K562 (cell line): ENCODE measurements at regions of chr13 and their contacts with region 1.

Region 1: GRCh38 chr13:24233351-24233901 is 72.9 kb downstream of the SPATA13 start:
- DNase-seq: no peak
- ATAC-seq: no peak
- H3K4me3 ChIP-seq: no peak overlapping the region
- H3K27ac ChIP-seq: no peak overlapping the region
- H3K4me1 ChIP-seq: no peaks in the 10 kb centered on the region
- H3K27me3 ChIP-seq: no peaks in the 10 kb centered on the region
- CTCF ChIP-seq: no peak
- EP300 ChIP-seq: no peak
- POLR2A ChIP-seq: no peak
- RAD21 ChIP-seq: no peak

Region 2: GRCh38 chr13:23656637-23657371 is 576.6 kb before region 1 on chr13:
- CTCF ChIA-PET with region 1: no interaction called
- POLR2A ChIA-PET with region 1: no interaction called
- in situ Hi-C with region 1: no loop called
- intact Hi-C with region 1: no loop called
- DNase-seq: peak in 1 of 4 experiments; percentile 2
- ATAC-seq: no peak
- H3K4me3 ChIP-seq: no peak overlapping the region
- H3K27ac ChIP-seq: no peak overlapping the region
- H3K4me1 ChIP-seq: no peaks in the 10 kb centered on the region
- H3K27me3 ChIP-seq: peaks cover 0 to 6% of the 10 kb centered on the region in 2 experiments; a peak in 2 of 5 replicates
- CTCF ChIP-seq: no peak
- EP300 ChIP-seq: 0 out of 2 replicates have a peak, but pooled peaks have one; percentile 10
- POLR2A ChIP-seq: no peak
- RAD21 ChIP-seq: no peak

Region 3: GRCh38 chr13:24012648-24013047 is 220.8 kb before region 1 on chr13:
- CTCF ChIA-PET with region 1: no interaction called
- POLR2A ChIA-PET with region 1: no interaction called
- in situ Hi-C with region 1: loop called (anchors 10 kb)
- intact Hi-C with region 1: no loop called
- DNase-seq: no peak
- ATAC-seq: no peak
- H3K4me3 ChIP-seq: no peak overlapping the region
- H3K27ac ChIP-seq: no peak overlapping the region
- H3K4me1 ChIP-seq: no peaks in the 10 kb centered on the region
- H3K27me3 ChIP-seq: peaks cover 0 to 20% of the 10 kb centered on the region in 2 experiments; a peak in 1 of 5 replicates
- CTCF ChIP-seq: no peak
- EP300 ChIP-seq: no peak
- POLR2A ChIP-seq: no peak
- RAD21 ChIP-seq: no peak

Region 4: DNA sequence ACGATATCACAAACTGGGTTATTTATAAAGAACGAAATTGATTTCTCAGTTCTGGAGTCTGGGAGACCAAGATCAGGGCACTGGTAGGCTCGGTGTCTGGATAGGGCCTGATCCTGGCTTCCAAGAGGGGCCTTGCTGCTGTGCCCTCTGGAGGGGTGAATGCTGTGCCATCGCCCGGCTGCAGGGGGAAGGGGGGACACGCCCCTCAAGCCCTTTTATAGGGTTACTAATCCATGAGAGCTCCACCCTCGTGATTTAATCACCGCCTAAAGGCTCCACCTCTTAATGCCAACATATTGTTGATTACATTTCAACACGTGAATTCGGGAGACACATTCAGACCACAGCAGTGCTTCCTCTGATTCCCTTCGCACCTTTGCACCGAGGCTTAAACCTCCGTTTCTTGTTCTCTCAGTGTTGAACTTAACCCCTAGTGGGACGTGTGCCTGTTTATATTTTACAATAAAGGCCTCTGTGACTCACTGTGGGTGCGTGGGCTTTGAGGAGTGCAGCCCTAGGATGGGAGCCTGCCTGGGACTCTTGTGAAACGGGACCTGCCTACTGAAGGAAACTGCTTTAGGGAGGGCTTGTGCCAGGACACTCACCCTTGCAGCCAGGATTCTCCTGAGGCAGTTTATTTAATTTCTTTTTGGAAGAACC is 125.3 kb before region 1 on chr13:
- CTCF ChIA-PET with region 1: no interaction called
- POLR2A ChIA-PET with region 1: no interaction called
- in situ Hi-C with region 1: no loop called
- intact Hi-C with region 1: no loop called
- DNase-seq: no peak
- ATAC-seq: no peak
- H3K4me3 ChIP-seq: no peak overlapping the region
- H3K27ac ChIP-seq: no peak overlapping the region
- H3K4me1 ChIP-seq: no peaks in the 10 kb centered on the region
- H3K27me3 ChIP-seq: peaks cover 0 to 4% of the 10 kb centered on the region in 2 experiments; a peak in 1 of 5 replicates
- CTCF ChIP-seq: no peak
- EP300 ChIP-seq: no peak
- POLR2A ChIP-seq: no peak
- RAD21 ChIP-seq: no peak

Region 5: GRCh38 chr13:24254146-24254841 is 20.9 kb after region 1 on chr13:
- CTCF ChIA-PET with region 1: no interaction called
- POLR2A ChIA-PET with region 1: no interaction called
- in situ Hi-C with region 1: no loop called
- intact Hi-C with region 1: no loop called
- DNase-seq: no peak
- ATAC-seq: no peak
- H3K4me3 ChIP-seq: no peak overlapping the region
- H3K27ac ChIP-seq: no peak overlapping the region
- H3K4me1 ChIP-seq: no peaks in the 10 kb centered on the region
- H3K27me3 ChIP-seq: peaks cover 2 to 21% of the 10 kb centered on the region in 2 experiments; a peak in 1 of 5 replicates
- CTCF ChIP-seq: no peak
- EP300 ChIP-seq: no peak
- POLR2A ChIP-seq: no peak
- RAD21 ChIP-seq: no peak